Left cardiac atrium (tissue), 4 donors: ENCODE measurements at regions of chr10 and their contacts with region 1.

Region 1: GRCh38 chr10:35635576-35635975 is 6.5 kb downstream of the FZD8 start:
- DNase-seq: no peak
- ATAC-seq: peak; percentile 59 to 61

Region 2: GRCh38 chr10:35480142-35480541 is 155.4 kb before region 1 on chr10:
- intact Hi-C with region 1: no loop called
- DNase-seq: no peak
- ATAC-seq: no peak

Region 3: GRCh38 chr10:35925493-35925892 is 289.9 kb after region 1 on chr10:
- intact Hi-C with region 1: loop called in 1 of 2 experiments (anchors 5 kb)
- DNase-seq: no peak
- ATAC-seq: peak in 1 of 2 donors; percentile 22

Region 4: DNA sequence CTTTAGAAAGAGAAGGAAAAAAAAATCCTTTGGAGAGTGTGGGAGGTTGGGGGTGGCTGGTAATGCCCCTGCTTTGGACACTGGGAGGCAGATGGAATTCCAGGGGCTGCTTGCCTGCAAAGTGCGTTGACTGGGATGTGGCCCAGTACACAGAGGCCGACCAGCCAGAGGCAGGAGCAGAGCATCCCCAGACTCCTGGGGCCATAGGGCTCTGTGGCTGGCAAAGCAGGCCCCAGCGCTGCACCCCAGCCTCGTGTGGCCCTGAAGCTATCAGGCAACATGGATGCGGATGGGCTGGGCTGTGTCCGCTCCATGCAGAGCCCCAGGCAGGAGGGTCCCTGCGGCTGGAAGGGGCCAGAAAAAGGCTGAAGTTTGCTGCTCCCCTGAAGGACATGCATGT is 368.1 kb after region 1 on chr10:
- intact Hi-C with region 1: loop called in 1 of 2 experiments (anchors 10 kb)
- DNase-seq: no peak
- ATAC-seq: no peak

Region 5: GRCh38 chr10:36725581-36726520 is 1090.3 kb after region 1 on chr10:
- intact Hi-C with region 1: loop called in 1 of 2 experiments (anchors 5 kb)
- DNase-seq: peak; percentile 29
- ATAC-seq: peak; percentile 79 to 93

Region 6: GRCh38 chr10:36779234-36779846 is 1143.8 kb after region 1 on chr10:
- intact Hi-C with region 1: loop called (anchors 2 to 5 kb)
- DNase-seq: no peak
- ATAC-seq: peak; percentile 95

Region 7: DNA sequence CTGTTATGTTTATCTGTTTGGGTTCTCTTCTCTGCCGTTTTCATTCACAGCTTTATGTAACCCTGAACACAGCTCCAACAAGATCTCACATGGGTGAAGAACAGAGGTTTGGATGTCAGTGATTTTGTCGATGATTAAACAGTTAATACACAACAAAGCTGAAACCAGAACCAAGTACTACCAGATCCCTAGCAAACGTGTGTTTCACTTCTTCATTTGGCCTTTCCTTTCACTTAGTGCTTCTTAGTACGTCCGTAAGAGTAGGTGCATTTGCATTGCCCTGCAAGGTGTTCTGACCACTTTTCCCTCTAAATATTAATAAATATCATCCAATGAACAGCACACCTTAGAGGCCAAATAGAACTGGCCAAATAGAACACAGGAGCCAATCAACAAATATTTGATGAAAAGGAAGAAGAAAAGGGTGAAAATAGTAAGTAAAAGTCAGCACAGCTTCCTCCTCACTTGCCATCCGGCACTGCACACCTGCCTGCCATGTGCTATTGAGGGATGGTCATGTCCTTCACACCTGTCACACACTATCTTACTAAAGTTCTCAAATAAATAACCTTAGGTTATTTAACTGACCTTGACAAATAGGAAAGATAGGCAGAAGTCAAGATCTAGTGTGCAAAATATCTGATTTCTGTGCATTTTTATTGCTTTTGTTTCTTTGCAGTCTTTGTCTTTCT is 1237.3 kb after region 1 on chr10:
- intact Hi-C with region 1: loop called (anchors 5 to 10 kb)
- DNase-seq: no peak
- ATAC-seq: no peak

Region 8: DNA sequence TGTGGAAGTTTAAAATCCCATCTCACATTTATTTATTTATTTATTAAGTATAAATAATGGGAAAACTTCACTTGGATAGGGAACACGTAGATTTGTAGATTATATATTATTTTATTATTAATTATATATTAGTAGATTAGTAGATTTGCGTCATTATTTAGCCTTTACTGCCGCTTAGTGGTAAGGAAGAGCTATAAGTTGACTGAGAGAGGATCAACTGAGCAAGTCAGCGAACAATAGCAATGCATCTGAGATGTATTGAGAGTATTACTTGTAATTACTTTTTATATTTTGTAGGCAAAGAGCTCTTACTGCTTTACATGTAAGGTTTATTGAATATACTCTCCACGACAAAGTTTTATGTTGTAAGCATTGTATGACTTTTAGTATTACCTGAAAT is 1245.3 kb after region 1 on chr10:
- intact Hi-C with region 1: loop called (anchors 5 to 10 kb)
- DNase-seq: no peak
- ATAC-seq: no peak